T-cell (primary cell): ENCODE measurements at regions of chr1 and their contacts with region 1.

Region 1: GRCh38 chr1:198850196-198850595 is 211.4 kb downstream of the PTPRC start:
- DNase-seq: no peak
- ATAC-seq: no peak
- H3K4me3 ChIP-seq: no peak overlapping the region
- H3K4me3 Mint-ChIP-seq: no peak overlapping the region
- H3K27ac ChIP-seq: no peak overlapping the region
- H3K27ac Mint-ChIP-seq: no peak overlapping the region
- H3K4me1 ChIP-seq: no peaks in the 10 kb centered on the region
- H3K4me1 Mint-ChIP-seq: no peaks in the 10 kb centered on the region
- H3K27me3 ChIP-seq: no peaks in the 10 kb centered on the region
- H3K27me3 Mint-ChIP-seq: no peaks in the 10 kb centered on the region

Region 2: DNA sequence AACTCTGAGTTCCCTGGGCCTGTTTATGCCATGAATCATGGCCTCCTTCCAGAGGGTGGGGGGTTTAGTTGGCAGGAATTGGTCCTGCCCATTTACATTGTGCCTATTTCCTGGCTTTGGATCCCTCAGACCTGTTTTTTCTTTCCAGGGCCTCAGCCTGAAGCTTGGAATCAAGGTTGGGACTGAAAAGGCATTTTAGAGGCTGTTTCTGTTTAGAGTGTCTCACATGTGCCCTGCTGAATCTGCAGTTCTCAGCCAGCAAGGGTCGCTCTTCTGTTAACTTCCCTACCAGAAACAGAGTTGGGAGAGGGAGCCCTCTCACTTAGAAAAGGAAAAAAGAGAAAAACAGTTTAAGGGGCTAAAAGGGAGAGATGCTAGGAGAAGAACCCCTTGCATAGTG is 20.3 kb before region 1 on chr1:
- CTCF ChIA-PET with region 1: no interaction called
- POLR2A ChIA-PET with region 1: interaction called in 1 of 2 experiments, 10 read pairs
- DNase-seq: no peak
- ATAC-seq: no peak
- H3K4me3 ChIP-seq: no peak overlapping the region
- H3K4me3 Mint-ChIP-seq: no peak overlapping the region
- H3K27ac ChIP-seq: no peak overlapping the region
- H3K27ac Mint-ChIP-seq: no peak overlapping the region
- H3K4me1 ChIP-seq: peaks cover 2 to 6% of the 10 kb centered on the region in 2 experiments
- H3K4me1 Mint-ChIP-seq: peaks cover 5 to 15% (median 10%) of the 10 kb centered on the region in 3 donors
- H3K27me3 ChIP-seq: peaks cover 0 to 5% of the 10 kb centered on the region in 2 experiments
- H3K27me3 Mint-ChIP-seq: peaks cover 0 to 2% of the 10 kb centered on the region in 2 donors